ENCODE measurements at regions of chr7 and their contacts with region 1.

Region 1: GRCh38 chr7:13990984-13991790 is 1.7 kb upstream of the ETV1 start:
- DNase-seq: peak; percentile 89 to 98 (median 92)
- ATAC-seq: peak; percentile 77
- H3K4me3 ChIP-seq: peak overlapping the region; percentile 51
- H3K27ac ChIP-seq: peak overlapping the region; percentile 93
- H3K4me1 ChIP-seq: peaks cover 3 to 4% of the 10 kb centered on the region in 2 experiments; a peak in 4 of 5 replicates
- H3K27me3 ChIP-seq: no peaks in the 10 kb centered on the region
- CTCF ChIP-seq: no peak
- EP300 ChIP-seq: peak; percentile 39; the same call in 1 of the 2 replicates
- POLR2A ChIP-seq: peak; percentile 89
- RAD21 ChIP-seq: no peak

Region 2: DNA sequence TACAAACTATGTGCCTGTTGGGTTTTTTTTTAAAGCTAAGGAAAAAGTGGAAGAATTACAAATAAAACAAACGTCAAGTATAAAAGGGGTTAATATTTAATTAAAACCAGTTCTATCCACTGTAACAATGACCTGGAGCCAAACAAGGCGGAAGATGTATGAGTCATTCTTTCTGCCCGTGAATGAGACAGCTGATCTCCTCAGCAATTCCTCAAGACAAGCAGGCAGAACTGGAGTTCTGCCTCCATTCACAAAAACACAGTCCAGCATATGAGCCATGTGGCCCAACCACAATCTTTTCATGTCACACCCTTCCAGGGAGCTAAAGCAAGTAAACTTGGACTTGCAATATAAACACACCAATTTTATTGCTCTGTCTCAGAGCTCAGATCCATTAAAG is 10.1 kb before region 1 on chr7:
- CTCF ChIA-PET with region 1: no interaction called
- POLR2A ChIA-PET with region 1: interaction called, 17 read pairs
- in situ Hi-C with region 1: no loop called
- intact Hi-C with region 1: no loop called
- DNase-seq: peak; percentile 74 to 91 (median 79)
- ATAC-seq: peak; percentile 80
- H3K4me3 ChIP-seq: no peak overlapping the region
- H3K27ac ChIP-seq: peak overlapping the region; percentile 85
- H3K4me1 ChIP-seq: peaks cover 0 to 19% of the 10 kb centered on the region in 2 experiments; a peak in 3 of 5 replicates
- H3K27me3 ChIP-seq: no peaks in the 10 kb centered on the region
- CTCF ChIP-seq: no peak
- EP300 ChIP-seq: peak; percentile 60; the same call in 1 of the 2 replicates
- POLR2A ChIP-seq: peak; percentile 60
- RAD21 ChIP-seq: peak in 1 of 2 experiments; percentile 29; a peak in 1 of 4 replicates

Region 3: GRCh38 chr7:14147532-14147931 is 156.3 kb after region 1 on chr7:
- CTCF ChIA-PET with region 1: no interaction called
- POLR2A ChIA-PET with region 1: no interaction called
- in situ Hi-C with region 1: no loop called
- intact Hi-C with region 1: no loop called
- DNase-seq: no peak
- ATAC-seq: no peak
- H3K4me3 ChIP-seq: no peak overlapping the region
- H3K27ac ChIP-seq: no peak overlapping the region
- H3K4me1 ChIP-seq: no peaks in the 10 kb centered on the region
- H3K27me3 ChIP-seq: no peaks in the 10 kb centered on the region
- CTCF ChIP-seq: no peak
- EP300 ChIP-seq: no peak
- POLR2A ChIP-seq: no peak
- RAD21 ChIP-seq: no peak

Region 4: GRCh38 chr7:14457568-14458453 is 466.6 kb after region 1 on chr7:
- CTCF ChIA-PET with region 1: no interaction called
- POLR2A ChIA-PET with region 1: no interaction called
- in situ Hi-C with region 1: no loop called
- intact Hi-C with region 1: loop called (anchors 10 kb)
- DNase-seq: peak; percentile 40 to 75 (median 52)
- ATAC-seq: peak; percentile 74
- H3K4me3 ChIP-seq: no peak overlapping the region
- H3K27ac ChIP-seq: no peak overlapping the region
- H3K4me1 ChIP-seq: no peaks in the 10 kb centered on the region
- H3K27me3 ChIP-seq: no peaks in the 10 kb centered on the region
- CTCF ChIP-seq: peak; percentile 42 to 76 (median 66)
- EP300 ChIP-seq: no peak
- POLR2A ChIP-seq: no peak
- RAD21 ChIP-seq: peak; percentile 78 to 83